ENCODE measurements at regions of chr9 and their contacts with region 1.

Region 1: DNA sequence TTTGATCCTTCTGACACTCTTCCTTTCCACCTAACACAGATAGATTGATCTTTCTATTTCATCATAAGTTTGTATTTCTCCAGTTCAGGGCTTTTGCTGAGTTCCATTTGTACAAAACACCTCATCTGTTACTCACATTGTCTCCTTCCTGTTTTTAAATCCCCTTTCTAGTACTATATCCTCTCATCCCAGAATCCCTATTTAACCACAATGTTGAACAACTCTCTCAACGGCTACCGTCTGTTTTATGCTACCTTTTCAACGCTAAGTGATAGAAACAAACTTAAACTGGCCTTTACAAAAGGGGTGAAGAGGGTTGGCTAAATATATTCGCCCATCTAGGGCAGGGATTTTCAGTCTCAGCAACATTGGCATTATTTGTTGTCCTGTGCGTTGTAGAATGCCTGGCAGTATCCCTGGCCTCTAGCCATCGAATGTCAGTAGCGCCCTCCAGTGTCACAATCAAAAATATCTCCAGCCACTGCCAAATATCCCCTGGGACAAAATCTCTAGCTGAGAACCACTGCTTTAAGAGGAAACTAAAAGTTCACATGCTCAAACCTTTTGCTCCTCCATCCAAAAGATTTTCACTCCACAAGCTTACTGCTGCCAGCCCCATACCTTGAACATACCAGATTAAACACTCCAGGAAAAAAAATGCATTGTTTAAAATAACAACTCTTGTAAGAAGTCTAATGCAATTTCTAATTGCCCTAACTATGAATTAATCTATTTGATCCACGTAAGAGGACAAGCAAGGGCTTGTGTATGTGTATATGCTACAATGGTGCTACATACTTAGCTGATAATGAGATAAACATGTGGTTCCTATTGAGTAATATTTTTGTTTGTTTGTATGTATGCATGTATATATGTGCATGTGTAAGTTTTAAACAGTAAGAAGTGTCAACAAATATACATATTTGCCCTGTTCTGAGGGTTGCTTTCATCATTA is 344.0 kb downstream of the PTPRD start:
- DNase-seq: peak in 1 of 2 donors; percentile 38
- ATAC-seq: peak in 7 of 8 donors; percentile 62 to 87 (median 81)
- H3K4me3 ChIP-seq: peak overlapping the region in 1 of 10 donors; percentile 16
- H3K27ac ChIP-seq: peak overlapping the region in 2 of 10 donors; percentile 7 to 48
- H3K4me1 ChIP-seq: peaks cover 0 to 4% (median 0%) of the 10 kb centered on the region in 9 donors
- H3K27me3 ChIP-seq: no peaks in the 10 kb centered on the region
- CTCF ChIP-seq: peak in 8 of 9 donors; percentile 13 to 61 (median 48)

Region 2: GRCh38 chr9:10059044-10059443 is 209.8 kb before region 1 on chr9:
- intact Hi-C with region 1: loop called in 7 of 10 experiments (anchors 2 to 10 kb)
- DNase-seq: no peak
- ATAC-seq: no peak
- H3K4me3 ChIP-seq: no peak overlapping the region
- H3K27ac ChIP-seq: no peak overlapping the region
- H3K4me1 ChIP-seq: peaks cover 0 to 5% (median 0%) of the 10 kb centered on the region in 9 donors
- H3K27me3 ChIP-seq: no peaks in the 10 kb centered on the region
- CTCF ChIP-seq: no peak

Measured in heart right ventricle (tissue), 16 donors.